GM12878 (cell line): ENCODE measurements at regions of chr11 and their contacts with region 1.

Region 1: GRCh38 chr11:69257838-69258658 is 35.9 kb upstream of the MYEOV start:
- DNase-seq: peak; percentile 73
- ATAC-seq: peak; percentile 88
- H3K4me3 ChIP-seq: no peak overlapping the region
- H3K27ac ChIP-seq: peak overlapping the region; percentile 77
- H3K4me1 ChIP-seq: peaks cover 18% of the 10 kb centered on the region
- H3K27me3 ChIP-seq: no peaks in the 10 kb centered on the region
- CTCF ChIP-seq: peak in 1 of 3 experiments; percentile 31; a peak in 2 of 6 replicates
- EP300 ChIP-seq: peak; percentile 59 to 68; a peak in 2 of 4 replicates
- POLR2A ChIP-seq: no peak
- RAD21 ChIP-seq: peak; percentile 41; the same call in 1 of the 2 replicates

Region 2: DNA sequence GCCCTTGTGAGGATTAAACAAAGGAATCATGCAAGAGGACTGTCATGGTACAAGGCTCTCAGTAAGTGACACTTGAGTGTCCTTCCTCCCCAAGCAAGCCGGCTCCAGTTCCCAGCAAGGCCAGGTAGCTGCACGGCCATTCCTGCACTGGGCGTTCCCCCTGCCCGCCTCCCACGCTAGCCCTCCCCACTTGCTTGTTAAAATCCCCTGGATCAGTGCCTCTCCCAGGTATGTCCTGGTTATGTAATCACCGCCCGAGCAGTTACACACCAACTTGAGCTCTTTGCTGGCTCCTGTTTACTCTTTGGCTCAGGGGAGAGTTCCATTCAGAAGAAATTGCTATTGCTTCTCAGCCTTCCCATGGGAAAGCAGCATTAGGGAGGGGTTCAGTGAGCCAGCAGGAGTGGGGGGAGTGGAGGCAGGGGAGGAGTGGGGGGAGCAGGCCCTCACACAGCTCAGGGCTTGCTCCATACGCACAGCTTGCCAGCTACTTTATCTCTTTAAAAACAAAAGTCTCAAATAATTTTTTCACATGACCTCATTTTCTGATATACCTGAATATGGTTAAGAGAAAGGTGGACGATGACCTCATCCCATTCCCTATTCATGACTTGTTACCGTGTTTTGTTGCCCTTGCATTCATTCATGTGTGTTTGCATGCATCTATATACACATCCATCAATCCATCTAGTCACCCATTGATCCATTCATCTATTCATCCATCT is 16.6 kb after region 1 on chr11:
- CTCF ChIA-PET with region 1: interaction called, 10 read pairs
- POLR2A ChIA-PET with region 1: interaction called, 6 read pairs
- RAD21 ChIA-PET with region 1: interaction called, 46 read pairs
- SMC1A ChIA-PET with region 1: interaction called, 27 read pairs
- in situ Hi-C with region 1: no loop called
- intact Hi-C with region 1: no loop called
- DNase-seq: no peak
- ATAC-seq: no peak
- H3K4me3 ChIP-seq: no peak overlapping the region
- H3K27ac ChIP-seq: no peak overlapping the region
- H3K4me1 ChIP-seq: peaks cover 19% of the 10 kb centered on the region
- H3K27me3 ChIP-seq: no peaks in the 10 kb centered on the region
- CTCF ChIP-seq: no peak
- EP300 ChIP-seq: no peak
- POLR2A ChIP-seq: no peak
- RAD21 ChIP-seq: no peak

Region 3: GRCh38 chr11:69280994-69281393 is 22.9 kb after region 1 on chr11:
- CTCF ChIA-PET with region 1: interaction called, 10 read pairs
- POLR2A ChIA-PET with region 1: interaction called, 6 read pairs
- RAD21 ChIA-PET with region 1: interaction called, 46 read pairs
- SMC1A ChIA-PET with region 1: interaction called, 10 read pairs
- in situ Hi-C with region 1: no loop called
- intact Hi-C with region 1: no loop called
- DNase-seq: no peak
- ATAC-seq: no peak
- H3K4me3 ChIP-seq: no peak overlapping the region
- H3K27ac ChIP-seq: no peak overlapping the region
- H3K4me1 ChIP-seq: peaks cover 19% of the 10 kb centered on the region
- H3K27me3 ChIP-seq: no peaks in the 10 kb centered on the region; a peak in 1 of 4 replicates
- CTCF ChIP-seq: no peak
- EP300 ChIP-seq: no peak
- POLR2A ChIP-seq: no peak
- RAD21 ChIP-seq: no peak

Region 4: GRCh38 chr11:69287968-69288882 is 30.2 kb after region 1 on chr11:
- CTCF ChIA-PET with region 1: interaction called, 11 read pairs
- POLR2A ChIA-PET with region 1: interaction called, 4 read pairs
- RAD21 ChIA-PET with region 1: interaction called, 4 read pairs
- SMC1A ChIA-PET with region 1: interaction called, 18 read pairs
- in situ Hi-C with region 1: no loop called
- intact Hi-C with region 1: no loop called
- DNase-seq: no peak
- ATAC-seq: peak; percentile 48
- H3K4me3 ChIP-seq: no peak overlapping the region
- H3K27ac ChIP-seq: no peak overlapping the region
- H3K4me1 ChIP-seq: no peaks in the 10 kb centered on the region
- H3K27me3 ChIP-seq: no peaks in the 10 kb centered on the region; a peak in 1 of 4 replicates
- CTCF ChIP-seq: no peak
- EP300 ChIP-seq: no peak
- POLR2A ChIP-seq: no peak
- RAD21 ChIP-seq: no peak